ENCODE measurements at regions of chr6 and their contacts with region 1.

Region 1: GRCh38 chr6:161370880-161371279 is 97.0 kb upstream of the AGPAT4 start:
- DNase-seq: no peak
- H3K4me3 ChIP-seq: no peak overlapping the region
- H3K27me3 ChIP-seq: no peaks in the 10 kb centered on the region
- CTCF ChIP-seq: peak; percentile 97

Region 2: GRCh38 chr6:160520043-160520904 is 850.6 kb before region 1 on chr6:
- CTCF ChIA-PET with region 1: interaction called, 33 read pairs
- POLR2A ChIA-PET with region 1: no interaction called
- DNase-seq: peak; percentile 4
- H3K4me3 ChIP-seq: peak overlapping the region; percentile 67
- H3K27me3 ChIP-seq: no peaks in the 10 kb centered on the region
- CTCF ChIP-seq: no peak; the same call in 1 of the 2 replicates

Region 3: GRCh38 chr6:160930547-160931377 is 440.1 kb before region 1 on chr6:
- CTCF ChIA-PET with region 1: interaction called, 244 read pairs
- POLR2A ChIA-PET with region 1: no interaction called
- DNase-seq: peak; percentile 16
- H3K4me3 ChIP-seq: peak overlapping the region; percentile 42
- H3K27me3 ChIP-seq: peaks cover 8% of the 10 kb centered on the region
- CTCF ChIP-seq: peak; percentile 94

Region 4: GRCh38 chr6:161152907-161153662 is 217.8 kb before region 1 on chr6:
- CTCF ChIA-PET with region 1: interaction called, 84 read pairs
- POLR2A ChIA-PET with region 1: no interaction called
- DNase-seq: no peak
- H3K4me3 ChIP-seq: no peak overlapping the region
- H3K27me3 ChIP-seq: no peaks in the 10 kb centered on the region
- CTCF ChIP-seq: peak; percentile 62

Region 5: DNA sequence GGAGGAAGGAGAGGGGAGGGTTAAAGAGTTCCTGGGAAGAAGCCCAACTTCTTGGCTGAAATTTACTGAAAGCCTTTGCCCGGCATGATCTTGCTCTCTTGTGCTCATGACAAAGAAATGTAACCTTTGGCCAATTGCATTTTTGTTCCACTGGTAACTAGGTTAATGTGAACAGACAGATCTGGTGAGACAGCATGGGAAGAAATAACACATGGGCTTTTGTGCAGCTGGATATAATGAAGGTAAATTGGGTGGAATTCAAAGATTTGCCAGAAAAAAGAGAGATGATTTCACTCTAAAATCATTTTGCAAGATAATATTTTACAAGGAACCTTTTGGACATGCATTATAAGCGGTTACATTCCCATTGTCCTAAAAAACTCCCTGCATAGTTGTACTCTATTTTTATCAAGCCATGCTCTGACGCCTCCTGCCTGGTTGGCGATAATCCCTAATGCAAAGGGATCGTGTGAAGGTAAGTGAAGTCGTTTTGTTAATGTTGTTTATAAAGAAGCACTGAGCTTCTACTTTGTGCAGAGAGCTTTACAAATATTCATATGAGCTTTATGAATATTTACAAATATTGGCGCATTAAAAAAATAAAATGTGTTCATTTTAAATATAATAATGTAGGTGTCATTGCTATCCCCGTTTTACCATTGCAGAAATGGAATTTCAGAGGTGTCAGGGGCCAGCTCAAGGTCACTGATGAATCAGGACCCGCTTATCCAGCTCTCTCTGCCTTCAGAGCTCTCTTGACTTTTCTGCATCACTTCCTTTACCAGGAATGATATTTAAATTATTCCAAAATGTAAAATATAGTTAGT is 64.3 kb after region 1 on chr6:
- CTCF ChIA-PET with region 1: no interaction called
- POLR2A ChIA-PET with region 1: no interaction called
- DNase-seq: peak; percentile 96
- H3K4me3 ChIP-seq: no peak overlapping the region
- H3K27me3 ChIP-seq: no peaks in the 10 kb centered on the region
- CTCF ChIP-seq: no peak

Region 6: DNA sequence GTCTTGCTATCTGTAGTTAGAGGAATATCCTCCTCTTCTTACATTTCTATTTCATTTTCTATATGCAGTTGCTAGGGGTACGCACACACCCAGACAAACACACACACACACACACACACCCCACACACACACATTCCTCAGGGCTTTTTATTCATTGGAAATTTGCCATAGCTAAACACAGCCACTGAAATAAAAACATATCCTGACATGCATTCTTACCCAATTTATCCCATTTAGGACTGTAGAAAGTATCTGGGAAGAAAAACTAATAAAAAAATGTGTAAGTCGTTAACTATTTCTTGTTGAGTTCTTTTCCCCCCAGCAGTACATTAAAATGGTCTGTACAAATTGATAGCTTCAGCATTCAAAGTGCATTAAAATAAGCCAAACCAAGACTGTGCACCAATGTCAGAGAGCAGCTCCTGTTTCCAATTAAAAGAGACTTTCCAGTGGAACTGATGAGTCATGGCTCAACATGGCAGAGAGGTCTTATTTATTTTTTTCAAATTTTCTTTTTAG is 260.9 kb after region 1 on chr6:
- CTCF ChIA-PET with region 1: no interaction called
- POLR2A ChIA-PET with region 1: interaction called, 26 read pairs
- DNase-seq: peak; percentile 92
- H3K4me3 ChIP-seq: no peak overlapping the region
- H3K27me3 ChIP-seq: no peaks in the 10 kb centered on the region
- CTCF ChIP-seq: no peak